ENCODE measurements at regions of chr17 and their contacts with region 1.

Region 1: DNA sequence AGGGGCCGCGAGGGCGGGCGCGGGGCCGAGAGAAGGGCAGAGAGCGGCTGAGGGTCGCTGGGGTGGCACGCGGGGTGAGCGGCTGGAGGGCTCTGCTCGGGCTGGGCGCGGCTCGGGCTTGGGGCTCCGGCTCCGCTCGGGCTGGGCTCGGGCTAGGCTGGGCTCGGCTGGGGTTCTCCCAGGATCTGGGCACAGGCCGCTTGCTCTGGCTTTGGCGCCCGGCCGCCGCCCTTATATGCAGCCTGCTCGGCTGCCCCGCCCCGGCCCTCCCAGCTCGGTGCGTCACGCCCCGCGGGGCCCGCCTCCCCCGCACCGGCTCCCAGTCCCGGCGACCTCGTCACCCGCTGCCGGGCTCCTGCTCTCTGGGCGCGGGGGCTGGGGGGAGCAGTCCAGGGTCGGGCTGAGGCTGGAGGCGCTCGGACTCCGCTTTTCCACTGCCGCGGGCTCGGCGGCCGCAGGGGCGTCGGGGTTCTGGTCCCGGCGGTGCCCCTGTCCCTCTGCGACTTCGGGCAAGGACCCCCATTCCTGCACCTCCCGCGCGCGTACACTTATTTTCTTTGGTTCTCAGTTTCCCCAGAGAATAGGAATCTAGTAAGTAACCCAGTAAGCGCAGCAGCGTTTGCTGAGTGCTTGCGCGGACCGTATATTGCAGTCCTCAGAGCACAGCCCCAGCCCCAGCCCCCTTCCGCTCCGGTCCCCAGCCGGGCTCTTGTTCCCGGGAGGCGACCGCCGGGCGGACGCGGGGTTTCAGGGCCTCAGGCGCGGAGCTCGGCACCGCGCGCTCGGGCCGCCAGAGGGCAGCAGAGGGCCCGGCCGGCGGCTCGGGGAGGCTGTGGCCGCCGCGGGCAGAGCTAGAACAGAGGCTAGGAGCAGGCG is at the start of gene RASD1:
- DNase-seq: peak; percentile 80 to 88 (median 85)
- H3K4me3 ChIP-seq: peak within 1 kb of the TSS; percentile 52 to 90 (median 75)
- H3K4me3 Mint-ChIP-seq: peak within 1 kb of the TSS; percentile 88 to 97
- H3K27ac ChIP-seq: peak within 1 kb of the TSS; percentile 54 to 80
- H3K27ac Mint-ChIP-seq: peak within 1 kb of the TSS in 6 of 7 donors; percentile 25 to 90 (median 72)
- H3K4me1 ChIP-seq: peaks cover 21 to 30% of the 10 kb centered on the region in 2 donors
- H3K4me1 Mint-ChIP-seq: peaks cover 20% of the 10 kb centered on the region
- H3K27me3 ChIP-seq: peaks cover 6 to 34% of the 10 kb centered on the region in 2 donors
- H3K27me3 Mint-ChIP-seq: peaks cover 31 to 41% (median 37%) of the 10 kb centered on the region in 3 donors
- CTCF ChIP-seq: peak; percentile 97
- polyA plus RNA-seq, gene RASD1: 0.88 to 12.4 (median 1.3) TPM

Region 2: DNA sequence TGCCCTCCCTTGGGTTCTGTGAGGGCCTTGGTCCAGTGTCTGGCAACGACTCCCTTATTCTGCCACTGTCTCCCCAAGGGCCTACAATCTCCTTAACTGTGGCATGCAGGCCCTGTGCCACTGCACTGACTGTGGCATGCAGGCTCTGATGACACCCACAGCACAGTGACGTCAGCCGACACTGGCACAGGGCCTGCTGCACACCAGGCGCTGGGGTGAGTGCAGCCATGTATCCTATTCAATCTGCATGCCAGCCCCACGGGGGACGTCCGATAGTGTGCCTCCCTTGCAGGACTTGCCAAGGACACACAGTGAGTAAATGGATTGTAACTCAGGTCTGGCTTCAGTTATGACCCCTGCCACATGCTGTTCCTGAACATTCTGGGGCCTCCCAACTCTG is 39.5 kb after region 1 on chr17:
- intact Hi-C with region 1: no loop called
- DNase-seq: no peak
- H3K4me3 ChIP-seq: no peak overlapping the region
- H3K4me3 Mint-ChIP-seq: no peak overlapping the region
- H3K27ac ChIP-seq: no peak overlapping the region
- H3K27ac Mint-ChIP-seq: no peak overlapping the region
- H3K4me1 ChIP-seq: peaks cover 0 to 8% of the 10 kb centered on the region in 2 donors
- H3K4me1 Mint-ChIP-seq: peaks cover 9% of the 10 kb centered on the region
- H3K27me3 ChIP-seq: no peaks in the 10 kb centered on the region
- H3K27me3 Mint-ChIP-seq: peaks cover 0 to 1% (median 0%) of the 10 kb centered on the region in 3 donors
- CTCF ChIP-seq: no peak

Region 3: DNA sequence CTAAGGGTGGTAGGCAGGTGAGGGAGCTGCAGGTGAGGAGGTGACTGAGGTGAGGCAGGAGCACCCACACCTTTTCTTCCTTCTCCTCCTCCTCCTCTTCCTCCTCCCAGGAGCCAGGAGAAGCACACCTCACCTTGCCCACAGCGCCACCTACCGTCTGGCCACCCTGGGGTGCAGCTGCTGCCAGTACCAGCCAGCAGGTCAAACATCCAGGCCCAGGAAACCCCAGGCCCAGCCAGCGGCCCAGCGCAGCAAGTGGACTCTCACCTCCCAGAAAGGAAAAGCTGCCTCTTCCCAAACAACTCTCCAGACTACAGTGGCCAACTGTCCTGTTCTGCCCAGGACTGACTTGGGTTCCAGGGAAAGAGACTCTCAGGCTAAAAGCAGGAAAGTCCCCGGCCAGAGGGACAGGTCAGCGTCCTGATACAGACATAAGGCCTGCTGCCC is 72.3 kb after region 1 on chr17:
- intact Hi-C with region 1: loop called in 1 of 2 experiments (anchors 5 kb)
- DNase-seq: peak; percentile 16 to 37 (median 31)
- H3K4me3 ChIP-seq: no peak overlapping the region
- H3K4me3 Mint-ChIP-seq: no peak overlapping the region
- H3K27ac ChIP-seq: no peak overlapping the region
- H3K27ac Mint-ChIP-seq: no peak overlapping the region
- H3K4me1 ChIP-seq: no peaks in the 10 kb centered on the region
- H3K4me1 Mint-ChIP-seq: no peaks in the 10 kb centered on the region
- H3K27me3 ChIP-seq: no peaks in the 10 kb centered on the region
- H3K27me3 Mint-ChIP-seq: no peaks in the 10 kb centered on the region
- CTCF ChIP-seq: peak; percentile 63

Region 4: DNA sequence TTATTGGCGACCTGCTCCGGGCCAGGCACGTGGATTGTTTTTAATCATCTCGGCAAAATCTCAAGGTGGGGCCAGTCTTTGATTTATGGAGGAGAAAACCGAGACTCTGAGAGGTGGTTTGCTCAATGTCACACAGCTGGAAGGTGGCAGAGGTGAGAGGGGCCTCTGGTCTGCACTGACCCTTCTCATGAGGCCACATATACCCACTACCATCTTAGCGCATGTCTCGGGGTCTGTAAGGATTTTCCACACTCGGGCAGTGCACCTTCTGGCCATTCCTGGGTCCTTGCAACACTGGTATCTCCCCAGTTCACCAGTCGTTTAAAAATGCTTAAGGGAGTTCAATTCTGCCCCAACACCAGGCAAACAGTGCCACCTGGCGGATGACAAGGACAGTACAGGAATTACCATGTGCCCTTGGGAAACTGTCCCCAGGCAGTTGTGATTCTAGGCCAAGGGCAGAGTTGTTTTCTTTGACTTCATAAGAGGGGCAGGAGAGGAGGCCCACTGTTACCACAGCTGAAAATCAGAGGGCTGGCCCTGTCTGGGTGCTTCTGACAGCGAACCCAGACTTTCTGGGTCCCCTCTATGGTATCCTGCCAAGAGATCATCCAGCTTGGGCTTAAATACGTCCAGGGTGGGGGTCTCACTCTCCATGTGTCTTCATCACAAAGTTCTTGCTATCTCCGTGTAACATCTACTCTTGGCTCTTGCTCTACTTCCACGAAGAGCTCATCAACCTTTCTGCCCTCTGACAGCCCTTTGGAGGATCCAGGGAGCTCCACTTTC is 145.4 kb after region 1 on chr17:
- intact Hi-C with region 1: loop called (anchors 1 to 5 kb)
- DNase-seq: peak; percentile 75 to 83 (median 77)
- H3K4me3 ChIP-seq: no peak overlapping the region
- H3K4me3 Mint-ChIP-seq: no peak overlapping the region
- H3K27ac ChIP-seq: no peak overlapping the region
- H3K27ac Mint-ChIP-seq: peak overlapping the region in 4 of 7 donors; percentile 24 to 81 (median 48)
- H3K4me1 ChIP-seq: peaks cover 41 to 48% of the 10 kb centered on the region in 2 donors
- H3K4me1 Mint-ChIP-seq: peaks cover 43% of the 10 kb centered on the region
- H3K27me3 ChIP-seq: no peaks in the 10 kb centered on the region
- H3K27me3 Mint-ChIP-seq: peaks cover 0 to 3% (median 2%) of the 10 kb centered on the region in 3 donors
- CTCF ChIP-seq: peak; percentile 82